Naive thymus-derived CD4-positive, alpha-beta T cell (primary cell): ENCODE measurements at regions of chr7 and their contacts with region 1.

Region 1: GRCh38 chr7:134458806-134459698 is at the start of gene AKR1B1:
- DNase-seq: peak; percentile 76 to 88 (median 84)
- ATAC-seq: peak; percentile 94
- H3K4me3 ChIP-seq: peak within 1 kb of the TSS; percentile 78
- H3K4me3 Mint-ChIP-seq: peak within 1 kb of the TSS; percentile 71 to 94 (median 89)
- H3K27ac ChIP-seq: peak within 1 kb of the TSS; percentile 72
- H3K27ac Mint-ChIP-seq: peak within 1 kb of the TSS; percentile 80 to 92 (median 84)
- H3K4me1 ChIP-seq: peaks cover 20 to 30% of the 10 kb centered on the region in 2 donors
- H3K4me1 Mint-ChIP-seq: peaks cover 30 to 55% (median 48%) of the 10 kb centered on the region in 7 donors
- H3K27me3 ChIP-seq: no peaks in the 10 kb centered on the region
- H3K27me3 Mint-ChIP-seq: no peaks in the 10 kb centered on the region
- total RNA-seq, gene AKR1B1: 62.2 to 108 (median 100) TPM

Region 2: DNA sequence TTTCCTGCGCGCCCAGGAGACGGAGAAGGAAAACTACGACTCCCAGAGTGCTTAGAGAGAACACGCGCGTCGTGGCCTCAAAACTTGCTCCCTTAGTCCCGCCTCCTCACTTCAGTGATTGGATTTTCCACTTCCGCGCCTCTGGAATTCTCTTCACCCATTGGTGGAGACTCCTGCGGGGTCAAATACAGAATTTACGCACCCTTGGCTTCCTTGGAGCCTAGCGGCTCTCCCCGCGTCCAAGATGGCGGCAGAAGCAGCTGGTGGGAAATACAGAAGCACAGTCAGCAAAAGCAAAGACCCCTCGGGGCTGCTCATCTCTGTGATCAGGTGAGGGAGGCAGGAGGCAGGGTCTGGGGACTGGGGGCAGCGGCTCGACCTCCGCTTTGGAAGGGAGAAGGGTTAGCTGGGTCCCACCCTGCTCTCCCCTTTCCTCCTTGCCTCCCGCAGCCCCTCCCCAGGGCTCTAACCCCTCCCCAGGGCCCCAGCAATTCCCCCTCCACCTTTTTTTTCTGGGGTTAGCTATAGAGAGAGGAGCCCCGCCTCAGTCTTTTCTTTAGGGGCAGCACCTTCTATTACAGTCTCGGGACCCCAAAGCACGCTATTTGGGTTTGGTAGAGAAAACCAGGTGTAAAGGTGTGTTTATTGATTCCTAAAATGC is 1206.1 kb before region 1 on chr7 and contains the start of gene EXOC4:
- CTCF ChIA-PET with region 1: no interaction called
- POLR2A ChIA-PET with region 1: no interaction called
- intact Hi-C with region 1: loop called (anchors 2 to 10 kb)
- DNase-seq: peak; percentile 66 to 97 (median 95)
- ATAC-seq: peak; percentile 100
- H3K4me3 ChIP-seq: peak within 1 kb of the TSS; percentile 87
- H3K4me3 Mint-ChIP-seq: peak within 1 kb of the TSS; percentile 85 to 99 (median 96)
- H3K27ac ChIP-seq: peak within 1 kb of the TSS; percentile 93
- H3K27ac Mint-ChIP-seq: peak within 1 kb of the TSS; percentile 94 to 98 (median 96)
- H3K4me1 ChIP-seq: peaks cover 4 to 7% of the 10 kb centered on the region in 2 donors
- H3K4me1 Mint-ChIP-seq: peaks cover 22 to 45% (median 40%) of the 10 kb centered on the region in 7 donors
- H3K27me3 ChIP-seq: no peaks in the 10 kb centered on the region
- H3K27me3 Mint-ChIP-seq: peaks cover 0 to 9% (median 0%) of the 10 kb centered on the region in 5 donors
- total RNA-seq, gene EXOC4: 65.4 to 106 (median 82.9) TPM

Region 3: GRCh38 chr7:134126966-134127848 is 331.8 kb before region 1 on chr7 and contains the start of gene LRGUK:
- CTCF ChIA-PET with region 1: no interaction called
- POLR2A ChIA-PET with region 1: no interaction called
- intact Hi-C with region 1: loop called in 1 of 2 experiments (anchors 1 kb)
- DNase-seq: peak; percentile 55 to 82 (median 77)
- ATAC-seq: peak; percentile 100
- H3K4me3 ChIP-seq: peak within 1 kb of the TSS; percentile 93
- H3K4me3 Mint-ChIP-seq: peak within 1 kb of the TSS; percentile 80 to 96 (median 88)
- H3K27ac ChIP-seq: no peak within 1 kb of the TSS
- H3K27ac Mint-ChIP-seq: peak within 1 kb of the TSS in 3 of 9 donors; percentile 16 to 65 (median 46)
- H3K4me1 ChIP-seq: peaks cover 3 to 9% of the 10 kb centered on the region in 2 donors
- H3K4me1 Mint-ChIP-seq: peaks cover 15 to 26% (median 18%) of the 10 kb centered on the region in 7 donors
- H3K27me3 ChIP-seq: no peaks in the 10 kb centered on the region
- H3K27me3 Mint-ChIP-seq: peaks cover 20 to 44% (median 23%) of the 10 kb centered on the region in 5 donors
- total RNA-seq, gene LRGUK: 0.22 to 1.0 (median 0.43) TPM

Region 4: GRCh38 chr7:134514663-134515062 is 55.6 kb after region 1 on chr7:
- CTCF ChIA-PET with region 1: interaction called, 11 read pairs
- POLR2A ChIA-PET with region 1: interaction called, 3 read pairs
- intact Hi-C with region 1: loop called (anchors 1 to 5 kb)
- DNase-seq: peak in 7 of 9 donors; percentile 32 to 67 (median 57)
- ATAC-seq: peak; percentile 81
- H3K4me3 ChIP-seq: no peak overlapping the region
- H3K4me3 Mint-ChIP-seq: peak overlapping the region in 1 of 10 donors; percentile 49
- H3K27ac ChIP-seq: no peak overlapping the region
- H3K27ac Mint-ChIP-seq: no peak overlapping the region
- H3K4me1 ChIP-seq: no peaks in the 10 kb centered on the region
- H3K4me1 Mint-ChIP-seq: peaks cover 4 to 6% (median 5%) of the 10 kb centered on the region in 7 donors
- H3K27me3 ChIP-seq: no peaks in the 10 kb centered on the region
- H3K27me3 Mint-ChIP-seq: peaks cover 6 to 21% (median 14%) of the 10 kb centered on the region in 5 donors

Region 5: GRCh38 chr7:134986363-134987251 is 527.6 kb after region 1 on chr7 and contains the start of gene AGBL3:
- CTCF ChIA-PET with region 1: no interaction called
- POLR2A ChIA-PET with region 1: no interaction called
- intact Hi-C with region 1: loop called (anchors 1 to 2 kb)
- DNase-seq: peak; percentile 80 to 92 (median 89)
- ATAC-seq: peak; percentile 94
- H3K4me3 ChIP-seq: peak within 1 kb of the TSS; percentile 92
- H3K4me3 Mint-ChIP-seq: peak within 1 kb of the TSS; percentile 93 to 100 (median 98)
- H3K27ac ChIP-seq: peak within 1 kb of the TSS; percentile 96
- H3K27ac Mint-ChIP-seq: peak within 1 kb of the TSS; percentile 97 to 100 (median 99)
- H3K4me1 ChIP-seq: no peaks in the 10 kb centered on the region
- H3K4me1 Mint-ChIP-seq: peaks cover 20 to 61% (median 52%) of the 10 kb centered on the region in 7 donors
- H3K27me3 ChIP-seq: no peaks in the 10 kb centered on the region
- H3K27me3 Mint-ChIP-seq: no peaks in the 10 kb centered on the region
- total RNA-seq, gene AGBL3: 2.1 to 6.6 (median 3.8) TPM

Region 6: GRCh38 chr7:135147899-135148721 is 689.1 kb after region 1 on chr7 and contains the start of gene TMEM140:
- CTCF ChIA-PET with region 1: no interaction called
- POLR2A ChIA-PET with region 1: no interaction called
- intact Hi-C with region 1: loop called (anchors 1 kb)
- DNase-seq: peak in 8 of 9 donors; percentile 56 to 88 (median 80)
- ATAC-seq: peak; percentile 84
- H3K4me3 ChIP-seq: peak within 1 kb of the TSS; percentile 71
- H3K4me3 Mint-ChIP-seq: peak within 1 kb of the TSS; percentile 83 to 95 (median 92)
- H3K27ac ChIP-seq: peak within 1 kb of the TSS; percentile 90
- H3K27ac Mint-ChIP-seq: peak within 1 kb of the TSS; percentile 93 to 99 (median 97)
- H3K4me1 ChIP-seq: peaks cover 31 to 38% of the 10 kb centered on the region in 2 donors
- H3K4me1 Mint-ChIP-seq: peaks cover 41 to 74% (median 70%) of the 10 kb centered on the region in 7 donors
- H3K27me3 ChIP-seq: no peaks in the 10 kb centered on the region
- H3K27me3 Mint-ChIP-seq: no peaks in the 10 kb centered on the region
- total RNA-seq, gene TMEM140: 17.8 to 44.7 (median 20.4) TPM

Region 7: GRCh38 chr7:135662373-135663114 is 1203.5 kb after region 1 on chr7 and contains the start of gene STMP1:
- CTCF ChIA-PET with region 1: no interaction called
- POLR2A ChIA-PET with region 1: no interaction called
- intact Hi-C with region 1: loop called (anchors 5 to 10 kb)
- DNase-seq: peak; percentile 89 to 97 (median 94)
- ATAC-seq: peak; percentile 99
- H3K4me3 ChIP-seq: peak within 1 kb of the TSS; percentile 91
- H3K4me3 Mint-ChIP-seq: peak within 1 kb of the TSS; percentile 86 to 98 (median 94)
- H3K27ac ChIP-seq: peak within 1 kb of the TSS; percentile 82
- H3K27ac Mint-ChIP-seq: peak within 1 kb of the TSS; percentile 80 to 95 (median 93)
- H3K4me1 ChIP-seq: peaks cover 6 to 15% of the 10 kb centered on the region in 2 donors
- H3K4me1 Mint-ChIP-seq: peaks cover 32 to 49% (median 43%) of the 10 kb centered on the region in 7 donors
- H3K27me3 ChIP-seq: no peaks in the 10 kb centered on the region
- H3K27me3 Mint-ChIP-seq: no peaks in the 10 kb centered on the region
- total RNA-seq, gene STMP1: 18.0 to 33.0 (median 24.7) TPM